Caco-2 (cell line): ENCODE measurements at regions of chr7 and their contacts with region 1.

Region 1: GRCh38 chr7:107879400-107880035 is 11.5 kb upstream of the DLD start:
- DNase-seq: peak in 1 of 2 experiments; percentile 52
- H3K4me3 ChIP-seq: no peak overlapping the region
- H3K4me3 Mint-ChIP-seq: no peak overlapping the region
- H3K27ac Mint-ChIP-seq: no peak overlapping the region
- H3K4me1 ChIP-seq: no peaks in the 10 kb centered on the region
- H3K4me1 Mint-ChIP-seq: peaks cover 20% of the 10 kb centered on the region
- H3K27me3 ChIP-seq: no peaks in the 10 kb centered on the region
- H3K27me3 Mint-ChIP-seq: peaks cover 2% of the 10 kb centered on the region
- CTCF ChIP-seq: peak; percentile 68 to 87

Region 2: GRCh38 chr7:107150375-107151073 is 729.0 kb before region 1 on chr7:
- CTCF ChIA-PET with region 1: interaction called, 3 read pairs
- POLR2A ChIA-PET with region 1: no interaction called
- intact Hi-C with region 1: loop called (anchors 10 kb)
- DNase-seq: peak; percentile 53 to 63
- H3K4me3 ChIP-seq: no peak overlapping the region
- H3K4me3 Mint-ChIP-seq: no peak overlapping the region
- H3K27ac Mint-ChIP-seq: no peak overlapping the region
- H3K4me1 ChIP-seq: no peaks in the 10 kb centered on the region
- H3K4me1 Mint-ChIP-seq: peaks cover 7% of the 10 kb centered on the region
- H3K27me3 ChIP-seq: no peaks in the 10 kb centered on the region
- H3K27me3 Mint-ChIP-seq: no peaks in the 10 kb centered on the region
- CTCF ChIP-seq: peak; percentile 62 to 81

Region 3: DNA sequence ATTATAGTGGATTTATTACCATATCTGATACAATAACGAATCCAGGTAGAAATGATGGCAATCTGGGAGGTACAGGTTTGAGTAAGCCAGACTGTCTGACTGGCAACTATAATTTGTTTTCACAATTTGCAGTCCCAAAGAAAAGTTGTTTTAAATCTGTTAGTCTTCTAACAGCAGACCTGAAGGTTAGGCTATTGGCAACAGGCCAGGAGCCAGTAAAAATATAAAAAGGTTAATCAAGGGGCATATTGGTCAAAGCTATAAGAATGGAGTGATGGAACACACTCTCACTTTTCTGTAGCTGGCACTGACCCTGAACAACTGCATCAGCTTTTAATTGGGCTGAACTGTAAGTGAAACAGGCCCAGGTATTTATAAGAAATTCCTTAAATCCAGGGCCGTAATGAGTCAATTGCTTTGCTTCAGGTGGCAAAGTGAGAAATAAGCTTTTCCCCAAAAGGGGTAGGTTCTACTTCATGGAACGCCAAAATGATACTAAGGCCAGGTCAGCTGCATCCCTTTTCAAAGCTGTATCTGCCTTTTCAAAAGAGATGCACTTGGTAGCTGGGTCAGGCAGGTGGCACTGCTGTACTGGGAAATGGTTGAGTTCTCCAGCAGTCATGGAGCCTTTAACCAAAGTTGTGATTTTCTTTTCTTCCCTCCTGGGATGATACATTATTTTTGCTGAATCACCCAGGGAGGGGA is 416.6 kb before region 1 on chr7:
- CTCF ChIA-PET with region 1: interaction called, 11 read pairs
- POLR2A ChIA-PET with region 1: no interaction called
- intact Hi-C with region 1: loop called (anchors 1 kb)
- DNase-seq: peak; percentile 61 to 63
- H3K4me3 ChIP-seq: no peak overlapping the region
- H3K4me3 Mint-ChIP-seq: no peak overlapping the region
- H3K27ac Mint-ChIP-seq: no peak overlapping the region
- H3K4me1 ChIP-seq: no peaks in the 10 kb centered on the region
- H3K4me1 Mint-ChIP-seq: no peaks in the 10 kb centered on the region
- H3K27me3 ChIP-seq: no peaks in the 10 kb centered on the region
- H3K27me3 Mint-ChIP-seq: no peaks in the 10 kb centered on the region
- CTCF ChIP-seq: peak; percentile 68 to 79

Region 4: DNA sequence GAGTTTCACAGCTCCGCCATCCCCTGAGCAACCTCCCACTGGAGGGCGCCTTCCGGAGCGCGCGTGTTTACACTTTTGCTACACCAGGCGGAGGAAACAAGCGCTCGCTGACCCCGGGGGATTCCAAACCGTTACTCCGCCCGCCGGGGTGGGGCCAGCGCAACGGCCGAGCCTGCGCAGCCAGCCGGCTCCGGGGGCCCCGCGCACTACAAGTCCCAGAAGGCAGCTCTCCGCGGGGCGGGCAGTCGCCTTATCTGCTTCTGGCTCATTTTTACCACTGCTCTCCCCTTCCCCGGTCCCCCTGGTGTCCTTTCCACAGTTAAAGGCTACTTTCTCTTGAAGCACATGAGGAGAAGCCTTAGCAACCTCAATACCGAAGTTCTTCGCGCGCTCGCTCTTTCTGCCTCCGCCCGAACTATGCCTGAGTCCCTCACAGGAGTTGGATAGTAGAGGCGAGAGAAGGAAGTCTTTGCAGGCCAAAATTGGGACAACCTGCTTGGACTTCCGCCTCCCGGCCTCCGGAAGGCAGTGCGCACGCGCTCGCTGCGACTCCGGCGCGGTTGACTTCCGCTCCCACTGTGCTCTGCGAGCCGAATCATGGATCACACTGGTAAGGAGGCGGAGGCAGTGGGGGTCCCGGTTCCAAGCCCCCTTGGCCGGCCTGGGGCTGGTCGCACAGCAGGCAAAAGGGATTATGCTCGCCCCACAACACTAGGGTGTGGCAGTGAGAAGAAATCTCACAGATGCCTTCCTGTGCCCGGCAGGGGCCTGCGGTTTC is 135.8 kb before region 1 on chr7 and contains the start of gene CBLL1:
- CTCF ChIA-PET with region 1: interaction called, 134 read pairs
- POLR2A ChIA-PET with region 1: interaction called, 15 read pairs
- intact Hi-C with region 1: loop called (anchors 1 kb)
- DNase-seq: peak; percentile 96 to 98
- H3K4me3 ChIP-seq: peak within 1 kb of the TSS; percentile 90
- H3K4me3 Mint-ChIP-seq: peak within 1 kb of the TSS; percentile 99
- H3K27ac Mint-ChIP-seq: peak within 1 kb of the TSS; percentile 98
- H3K4me1 ChIP-seq: peaks cover 10% of the 10 kb centered on the region
- H3K4me1 Mint-ChIP-seq: peaks cover 22% of the 10 kb centered on the region
- H3K27me3 ChIP-seq: no peaks in the 10 kb centered on the region
- H3K27me3 Mint-ChIP-seq: peaks cover 5% of the 10 kb centered on the region
- CTCF ChIP-seq: peak; percentile 47 to 87
- total RNA-seq, gene CBLL1: 35.9 and 39.1 TPM in 2 replicates

Region 5: DNA sequence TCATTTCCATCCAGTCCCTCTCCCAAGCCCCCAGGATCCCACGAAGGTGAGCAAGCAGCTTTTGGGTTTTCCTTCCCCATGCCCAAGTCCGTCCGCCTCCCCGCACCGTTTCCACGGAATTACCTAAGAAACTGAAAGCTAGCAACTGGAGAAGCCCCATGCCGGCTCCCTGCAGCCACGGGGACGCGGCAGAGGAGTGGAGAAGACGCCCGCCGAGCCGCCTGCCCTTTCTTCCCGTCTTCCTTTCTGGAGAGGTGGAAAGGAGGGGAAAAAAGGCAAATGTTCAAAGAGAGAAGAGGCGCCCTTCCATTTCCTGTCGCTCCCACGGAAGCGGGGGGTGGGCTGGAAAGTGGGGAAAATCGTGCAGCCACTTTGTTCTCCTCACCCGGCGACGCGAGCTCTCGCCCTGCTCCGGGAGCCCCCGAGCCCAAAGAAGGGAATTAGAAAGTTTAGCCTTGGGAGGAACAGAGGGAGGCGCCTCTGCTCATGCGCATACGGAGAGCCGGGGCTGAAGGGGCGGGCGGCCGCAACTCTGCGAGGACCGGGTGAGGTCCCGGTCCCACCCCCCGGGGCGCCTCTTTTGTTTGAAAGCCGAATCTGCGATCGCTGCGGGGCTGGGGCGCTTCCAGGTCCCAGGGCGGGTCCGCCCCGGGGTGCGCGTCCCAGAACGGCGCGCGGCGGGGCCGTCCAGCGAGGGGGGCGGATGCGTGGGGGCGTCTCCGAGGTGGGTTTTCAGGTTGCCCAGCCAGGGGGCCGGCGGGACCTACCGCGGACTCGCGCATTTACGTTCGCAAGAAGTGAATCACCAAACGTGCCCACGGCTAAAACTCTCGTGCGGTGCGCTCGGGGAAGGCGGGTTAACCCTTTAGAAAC is 123.4 kb after region 1 on chr7 and contains the start of gene LAMB1:
- CTCF ChIA-PET with region 1: interaction called, 12 read pairs
- POLR2A ChIA-PET with region 1: no interaction called
- intact Hi-C with region 1: no loop called
- DNase-seq: peak; percentile 93 to 94
- H3K4me3 ChIP-seq: peak within 1 kb of the TSS; percentile 94
- H3K4me3 Mint-ChIP-seq: peak within 1 kb of the TSS; percentile 79
- H3K27ac Mint-ChIP-seq: peak within 1 kb of the TSS; percentile 83
- H3K4me1 ChIP-seq: peaks cover 70% of the 10 kb centered on the region
- H3K4me1 Mint-ChIP-seq: peaks cover 38% of the 10 kb centered on the region
- H3K27me3 ChIP-seq: no peaks in the 10 kb centered on the region
- H3K27me3 Mint-ChIP-seq: no peaks in the 10 kb centered on the region
- CTCF ChIP-seq: no peak
- total RNA-seq, gene LAMB1: 418 and 431 TPM in 2 replicates

Region 6: DNA sequence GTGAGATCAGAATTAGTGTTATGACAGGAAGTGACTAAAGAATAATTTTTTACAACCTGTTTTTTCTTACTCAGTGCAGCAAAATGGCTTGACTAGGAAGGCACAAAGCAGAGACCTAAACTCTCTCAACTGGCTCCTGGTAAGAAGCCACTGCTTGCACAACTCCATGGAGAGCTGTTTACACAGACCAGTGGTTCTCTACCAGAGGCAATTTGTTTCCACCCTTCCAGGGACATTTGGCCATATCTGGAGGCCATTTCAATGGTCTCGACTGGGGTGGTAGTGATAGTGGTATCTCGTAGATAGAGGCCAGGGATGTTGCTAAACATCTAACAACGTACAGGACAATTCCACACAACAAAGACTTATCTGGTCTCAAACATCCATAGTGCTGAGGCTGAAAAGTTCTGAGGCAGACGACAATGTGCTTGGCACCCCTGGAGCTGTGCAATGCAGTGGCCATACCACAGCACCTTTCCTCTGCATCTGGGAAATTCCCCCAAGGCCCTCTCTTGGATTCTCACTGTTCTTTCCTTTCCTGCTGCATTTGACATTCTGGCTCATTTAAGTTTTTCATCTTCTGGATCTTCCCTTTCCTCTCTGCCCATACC is 356.0 kb after region 1 on chr7:
- CTCF ChIA-PET with region 1: no interaction called
- POLR2A ChIA-PET with region 1: no interaction called
- intact Hi-C with region 1: no loop called
- DNase-seq: peak; percentile 78 to 89
- H3K4me3 ChIP-seq: no peak overlapping the region
- H3K4me3 Mint-ChIP-seq: peak overlapping the region; percentile 40
- H3K27ac Mint-ChIP-seq: peak overlapping the region; percentile 81
- H3K4me1 ChIP-seq: peaks cover 59% of the 10 kb centered on the region
- H3K4me1 Mint-ChIP-seq: peaks cover 39% of the 10 kb centered on the region
- H3K27me3 ChIP-seq: no peaks in the 10 kb centered on the region
- H3K27me3 Mint-ChIP-seq: no peaks in the 10 kb centered on the region
- CTCF ChIP-seq: no peak